ENCODE measurements at regions of chr18 and their contacts with region 1.

Region 1: GRCh38 chr18:58043491-58044379 is at the start of gene NEDD4L:
- DNase-seq: peak; percentile 83
- ATAC-seq: peak; percentile 90
- H3K4me3 ChIP-seq: peak within 1 kb of the TSS; percentile 79
- H3K27ac ChIP-seq: peak within 1 kb of the TSS; percentile 58
- H3K4me1 ChIP-seq: peaks cover 5% of the 10 kb centered on the region
- H3K27me3 ChIP-seq: peaks cover 2% of the 10 kb centered on the region
- CTCF ChIP-seq: peak; percentile 95
- POLR2A ChIP-seq: peak; percentile 54; the same call in 1 of the 2 replicates
- RAD21 ChIP-seq: peak; percentile 92
- total RNA-seq, gene NEDD4L: 10.0 and 12.8 TPM in 2 replicates

Region 2: DNA sequence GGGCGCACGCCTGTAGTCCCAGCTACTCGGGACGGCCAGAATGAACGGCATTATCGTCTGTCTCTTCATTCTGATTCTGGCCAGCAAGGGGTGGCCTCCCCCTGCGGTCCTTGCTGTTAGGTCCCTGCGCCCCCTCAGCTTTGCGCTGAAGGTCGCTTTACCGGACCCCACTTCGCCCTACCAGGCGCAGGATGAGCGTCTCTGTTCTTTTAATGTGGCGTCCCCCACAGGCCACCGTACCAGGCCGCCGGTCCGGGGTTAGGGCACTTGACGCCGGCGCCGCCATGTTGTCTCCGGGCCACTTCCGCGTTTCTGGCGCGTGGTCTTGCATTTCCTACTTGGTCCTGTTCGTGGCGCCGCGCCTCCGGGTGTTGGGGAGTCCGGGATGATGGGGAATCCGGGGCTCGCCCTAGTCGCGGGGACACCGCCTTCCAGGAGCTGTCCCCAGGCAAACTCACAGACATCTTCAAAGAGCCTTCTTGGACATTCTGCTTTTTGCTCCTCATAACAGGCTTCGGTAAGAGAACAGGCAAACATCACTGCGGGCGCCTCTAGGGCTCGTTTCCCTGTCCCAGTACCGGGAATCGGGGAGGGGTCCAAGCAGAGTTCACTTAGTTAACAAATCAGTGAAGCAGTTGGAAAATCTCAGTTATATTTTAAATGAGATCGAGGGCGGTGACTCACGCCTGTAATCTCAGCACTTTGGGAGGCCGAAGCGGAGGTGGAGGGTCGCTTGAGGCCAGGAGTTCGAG is 413.6 kb before region 1 on chr18:
- CTCF ChIA-PET with region 1: no interaction called
- POLR2A ChIA-PET with region 1: no interaction called
- dilution Hi-C with region 1: no loop called
- in situ Hi-C with region 1: no loop called
- intact Hi-C with region 1: loop called (anchors 1 kb)
- DNase-seq: peak; percentile 93
- ATAC-seq: peak; percentile 98
- H3K4me3 ChIP-seq: peak overlapping the region; percentile 62
- H3K27ac ChIP-seq: peak overlapping the region; percentile 90
- H3K4me1 ChIP-seq: peaks cover 3% of the 10 kb centered on the region
- H3K27me3 ChIP-seq: no peaks in the 10 kb centered on the region
- CTCF ChIP-seq: peak; percentile 82
- POLR2A ChIP-seq: peak; percentile 79
- RAD21 ChIP-seq: peak; percentile 75

Region 3: DNA sequence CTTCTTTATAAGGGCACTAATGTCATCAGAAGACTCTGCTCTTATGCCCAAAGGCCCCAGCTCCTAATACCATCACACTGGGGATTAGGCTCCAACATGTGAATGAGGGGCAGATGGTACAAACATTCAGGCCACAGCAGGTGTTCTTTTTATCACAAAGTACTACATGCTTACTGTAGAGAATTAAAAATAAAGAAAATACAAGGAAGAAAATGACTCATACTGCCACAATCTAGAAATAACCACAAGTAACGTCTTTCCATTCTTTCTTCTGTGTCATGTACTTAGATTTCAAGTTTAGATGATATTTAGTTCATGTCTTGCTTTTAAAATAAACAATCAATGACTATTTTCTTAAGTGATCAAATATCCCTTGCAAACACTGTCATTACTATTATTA is 100.0 kb before region 1 on chr18:
- CTCF ChIA-PET with region 1: no interaction called
- POLR2A ChIA-PET with region 1: no interaction called
- dilution Hi-C with region 1: no loop called
- in situ Hi-C with region 1: no loop called
- intact Hi-C with region 1: no loop called
- DNase-seq: peak; percentile 86
- ATAC-seq: peak; percentile 87
- H3K4me3 ChIP-seq: no peak overlapping the region
- H3K27ac ChIP-seq: no peak overlapping the region
- H3K4me1 ChIP-seq: peaks cover 5% of the 10 kb centered on the region
- H3K27me3 ChIP-seq: no peaks in the 10 kb centered on the region
- CTCF ChIP-seq: no peak
- POLR2A ChIP-seq: no peak
- RAD21 ChIP-seq: no peak

Region 4: GRCh38 chr18:57959278-57959677 is 84.5 kb before region 1 on chr18:
- CTCF ChIA-PET with region 1: interaction called, 10 read pairs
- POLR2A ChIA-PET with region 1: no interaction called
- dilution Hi-C with region 1: no loop called
- in situ Hi-C with region 1: no loop called
- intact Hi-C with region 1: no loop called
- DNase-seq: peak; percentile 62
- ATAC-seq: peak; percentile 85
- H3K4me3 ChIP-seq: no peak overlapping the region
- H3K27ac ChIP-seq: no peak overlapping the region
- H3K4me1 ChIP-seq: no peaks in the 10 kb centered on the region
- H3K27me3 ChIP-seq: peaks cover 16% of the 10 kb centered on the region
- CTCF ChIP-seq: peak; percentile 44
- POLR2A ChIP-seq: no peak
- RAD21 ChIP-seq: peak; percentile 48

Region 5: GRCh38 chr18:58180738-58181353 is 137.1 kb after region 1 on chr18:
- CTCF ChIA-PET with region 1: interaction called, 4 read pairs
- POLR2A ChIA-PET with region 1: no interaction called
- dilution Hi-C with region 1: no loop called
- in situ Hi-C with region 1: no loop called
- intact Hi-C with region 1: loop called (anchors 1 kb)
- DNase-seq: peak; percentile 47
- ATAC-seq: no peak
- H3K4me3 ChIP-seq: no peak overlapping the region
- H3K27ac ChIP-seq: no peak overlapping the region
- H3K4me1 ChIP-seq: peaks cover 23% of the 10 kb centered on the region
- H3K27me3 ChIP-seq: no peaks in the 10 kb centered on the region
- CTCF ChIP-seq: peak; percentile 77
- POLR2A ChIP-seq: no peak
- RAD21 ChIP-seq: peak; percentile 70

Region 6: GRCh38 chr18:58476516-58477256 is 433.0 kb after region 1 on chr18:
- CTCF ChIA-PET with region 1: no interaction called
- POLR2A ChIA-PET with region 1: no interaction called
- dilution Hi-C with region 1: no loop called
- in situ Hi-C with region 1: no loop called
- intact Hi-C with region 1: loop called (anchors 5 kb)
- DNase-seq: no peak
- ATAC-seq: no peak
- H3K4me3 ChIP-seq: no peak overlapping the region
- H3K27ac ChIP-seq: no peak overlapping the region
- H3K4me1 ChIP-seq: peaks cover 1% of the 10 kb centered on the region; the same call in 1 of the 2 replicates
- H3K27me3 ChIP-seq: peaks cover 6% of the 10 kb centered on the region
- CTCF ChIP-seq: no peak
- POLR2A ChIP-seq: no peak
- RAD21 ChIP-seq: no peak

Region 7: DNA sequence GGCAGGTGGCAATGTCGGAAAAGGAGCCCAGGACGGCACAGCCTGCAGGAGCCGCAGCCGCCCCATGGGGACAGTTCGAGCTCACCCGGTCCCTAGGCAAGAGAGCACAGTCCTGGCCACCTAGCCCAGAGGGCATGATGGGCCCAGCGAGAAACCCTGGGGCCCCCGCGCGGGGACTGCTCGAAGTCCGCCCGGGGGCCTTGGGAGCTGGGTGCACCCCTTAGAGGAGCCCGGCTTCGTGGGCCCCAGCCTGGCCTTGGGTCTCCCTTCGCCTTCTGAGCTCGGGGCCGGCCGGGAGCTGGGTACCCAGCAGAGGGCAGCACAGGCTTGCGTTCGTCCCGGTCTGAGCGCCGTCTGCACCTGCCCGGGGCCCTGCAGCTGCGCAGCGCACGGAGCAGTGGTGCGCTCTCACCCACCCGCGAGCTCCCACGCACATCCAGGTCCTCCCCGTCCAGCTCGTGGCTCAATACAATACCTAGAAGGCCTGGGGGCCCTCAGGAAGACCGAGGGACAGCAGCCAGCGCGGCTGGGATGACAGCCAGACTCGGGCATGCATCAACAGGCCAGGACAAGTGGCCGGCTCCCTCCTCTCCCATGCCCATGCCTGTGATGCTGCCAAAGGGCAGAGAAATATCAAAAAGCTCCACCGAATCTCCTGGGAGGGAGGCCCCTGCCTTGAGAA is 724.7 kb after region 1 on chr18:
- CTCF ChIA-PET with region 1: no interaction called
- POLR2A ChIA-PET with region 1: no interaction called
- dilution Hi-C with region 1: no loop called
- in situ Hi-C with region 1: loop called (anchors 10 kb)
- intact Hi-C with region 1: loop called (anchors 5 kb)
- DNase-seq: peak; percentile 48
- ATAC-seq: peak; percentile 92
- H3K4me3 ChIP-seq: 0 out of 2 replicates have a peak overlapping the region, but pooled peaks have one; percentile 20
- H3K27ac ChIP-seq: no peak overlapping the region
- H3K4me1 ChIP-seq: peaks cover 4% of the 10 kb centered on the region; the same call in 1 of the 2 replicates
- H3K27me3 ChIP-seq: peaks cover 28% of the 10 kb centered on the region
- CTCF ChIP-seq: peak; percentile 79
- POLR2A ChIP-seq: no peak
- RAD21 ChIP-seq: peak; percentile 87